Sigmoid colon (tissue), 7 donors: ENCODE measurements at regions of chrX and their contacts with region 1.

Region 1: DNA sequence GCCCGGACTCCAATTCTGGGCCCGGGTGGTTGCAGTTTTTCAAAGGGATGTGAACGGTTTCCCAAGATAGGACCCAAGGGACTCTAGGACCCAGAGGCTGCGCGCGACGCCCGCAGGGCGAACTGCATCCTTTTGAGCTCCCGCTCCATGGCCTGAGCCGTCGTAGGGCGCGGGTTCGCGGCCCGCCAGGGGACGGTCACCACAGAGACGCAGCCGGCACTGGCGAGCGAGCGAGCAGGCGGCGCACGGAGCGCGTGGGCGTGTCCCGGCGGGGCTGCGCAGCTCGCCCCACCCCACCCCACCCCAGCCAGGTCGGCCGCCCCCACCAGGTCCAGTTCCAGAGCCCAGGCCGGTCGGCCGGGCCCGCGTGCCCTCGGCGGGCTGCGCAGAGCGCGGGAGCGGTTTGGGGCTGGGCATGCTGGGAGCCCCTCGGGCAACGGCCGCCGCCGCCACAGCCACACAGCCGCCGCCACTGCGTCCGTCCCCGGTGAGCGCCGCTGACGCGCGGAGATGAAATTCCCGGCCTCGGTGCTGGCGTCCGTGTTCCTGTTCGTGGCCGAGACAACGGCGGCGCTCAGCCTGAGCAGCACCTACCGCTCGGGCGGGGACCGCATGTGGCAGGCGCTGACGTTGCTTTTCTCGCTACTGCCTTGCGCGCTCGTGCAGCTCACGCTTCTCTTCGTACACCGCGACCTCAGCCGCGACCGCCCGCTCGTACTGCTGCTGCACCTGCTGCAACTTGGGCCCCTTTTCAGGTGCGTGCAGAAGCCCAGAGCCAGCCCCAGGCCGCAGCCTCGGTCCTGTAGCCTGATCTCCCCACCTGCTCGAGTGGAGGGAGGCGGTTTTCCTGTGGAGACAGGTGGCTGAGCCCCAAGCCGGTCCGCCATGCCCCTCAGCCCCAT is at the start of gene XK:
- DNase-seq: peak; percentile 76
- H3K4me3 ChIP-seq: peak within 1 kb of the TSS; percentile 34 to 61 (median 53)
- H3K27ac ChIP-seq: peak within 1 kb of the TSS; percentile 85 to 92 (median 87)
- H3K4me1 ChIP-seq: peaks cover 0 to 27% (median 9%) of the 10 kb centered on the region in 4 donors
- H3K27me3 ChIP-seq: no peaks in the 10 kb centered on the region
- CTCF ChIP-seq: no peak
- EP300 ChIP-seq: no peak
- POLR2A ChIP-seq: peak in 1 of 2 donors; percentile 18
- total RNA-seq, gene XK: 14.1 to 27.0 (median 20.3) TPM

Region 2: GRCh38 chrX:37578045-37578444 is 107.7 kb before region 1 on chrX:
- intact Hi-C with region 1: loop called (anchors 10 kb)
- DNase-seq: no peak
- H3K4me3 ChIP-seq: no peak overlapping the region
- H3K27ac ChIP-seq: peak overlapping the region; percentile 33 to 68 (median 56)
- H3K4me1 ChIP-seq: no peaks in the 10 kb centered on the region
- H3K27me3 ChIP-seq: no peaks in the 10 kb centered on the region
- CTCF ChIP-seq: no peak
- EP300 ChIP-seq: no peak
- POLR2A ChIP-seq: no peak